Activated CD8-positive, alpha-beta memory T cell treated with anti-CD3 and anti-CD28 coated beads, Interleukin-2, amount 10 ng/mL, durations not matched to agents 7 days and 5 days (primary cell): ENCODE measurements at regions of chr14 and their contacts with region 1.

Region 1: DNA sequence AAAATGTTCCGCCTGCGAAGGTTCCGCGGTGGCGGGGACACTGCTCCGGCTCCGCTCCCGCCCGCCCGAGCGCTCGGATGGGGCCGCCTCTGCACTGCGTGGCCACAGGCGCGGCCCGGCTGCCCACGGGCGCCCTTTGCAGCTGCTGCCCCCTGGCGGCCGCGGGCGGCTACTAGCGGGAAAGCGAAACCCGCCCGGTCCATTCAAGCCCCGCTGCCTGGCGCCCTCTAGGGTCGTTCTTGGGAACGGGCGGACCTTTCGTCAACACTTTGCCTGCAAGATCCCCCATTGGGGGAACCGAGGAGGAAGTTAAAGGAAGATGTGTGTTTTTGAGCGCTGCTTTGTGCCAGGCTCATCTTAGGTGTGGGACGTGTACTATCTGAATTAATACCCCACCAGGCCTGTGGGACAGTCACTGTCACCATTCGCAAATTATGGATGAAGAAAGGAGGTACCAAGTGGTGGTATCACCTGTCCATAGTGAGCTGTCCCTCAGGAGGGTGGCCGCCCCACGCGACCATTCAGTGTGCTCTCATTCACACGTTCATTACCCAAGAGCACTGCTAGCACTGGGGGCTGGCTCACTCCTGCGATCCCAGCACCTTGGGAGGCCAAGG is 19.4 kb downstream of the GPR132 start:
- DNase-seq: peak; percentile 95
- ATAC-seq: peak; percentile 87
- H3K4me3 Mint-ChIP-seq: no peak overlapping the region
- H3K27ac Mint-ChIP-seq: peak overlapping the region; percentile 44
- H3K4me1 Mint-ChIP-seq: peaks cover 25% of the 10 kb centered on the region
- H3K27me3 Mint-ChIP-seq: peaks cover 12% of the 10 kb centered on the region

Region 2: DNA sequence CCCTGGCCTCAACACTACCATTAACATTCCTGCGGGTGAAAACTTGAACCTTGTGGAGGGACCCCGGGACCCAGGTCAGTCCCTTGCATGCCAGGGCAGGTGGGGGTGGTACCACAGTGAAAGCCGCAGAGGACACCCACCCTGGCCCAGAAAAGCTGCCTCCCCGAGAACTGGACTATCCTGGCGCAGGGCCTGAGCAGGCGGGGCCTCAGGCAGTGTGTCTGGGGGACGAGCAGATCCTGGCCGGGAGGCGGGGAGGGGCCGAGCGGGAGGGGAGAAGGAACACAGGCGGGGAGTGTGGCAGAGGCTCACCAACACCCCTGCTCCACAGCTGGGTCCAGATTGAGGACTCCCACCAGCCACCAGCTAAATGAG is 77.7 kb before region 1 on chr14:
- CTCF ChIA-PET with region 1: interaction called, 140 read pairs
- DNase-seq: no peak
- ATAC-seq: no peak
- H3K4me3 Mint-ChIP-seq: no peak overlapping the region
- H3K27ac Mint-ChIP-seq: no peak overlapping the region
- H3K4me1 Mint-ChIP-seq: peaks cover 2% of the 10 kb centered on the region
- H3K27me3 Mint-ChIP-seq: peaks cover 23% of the 10 kb centered on the region

Region 3: DNA sequence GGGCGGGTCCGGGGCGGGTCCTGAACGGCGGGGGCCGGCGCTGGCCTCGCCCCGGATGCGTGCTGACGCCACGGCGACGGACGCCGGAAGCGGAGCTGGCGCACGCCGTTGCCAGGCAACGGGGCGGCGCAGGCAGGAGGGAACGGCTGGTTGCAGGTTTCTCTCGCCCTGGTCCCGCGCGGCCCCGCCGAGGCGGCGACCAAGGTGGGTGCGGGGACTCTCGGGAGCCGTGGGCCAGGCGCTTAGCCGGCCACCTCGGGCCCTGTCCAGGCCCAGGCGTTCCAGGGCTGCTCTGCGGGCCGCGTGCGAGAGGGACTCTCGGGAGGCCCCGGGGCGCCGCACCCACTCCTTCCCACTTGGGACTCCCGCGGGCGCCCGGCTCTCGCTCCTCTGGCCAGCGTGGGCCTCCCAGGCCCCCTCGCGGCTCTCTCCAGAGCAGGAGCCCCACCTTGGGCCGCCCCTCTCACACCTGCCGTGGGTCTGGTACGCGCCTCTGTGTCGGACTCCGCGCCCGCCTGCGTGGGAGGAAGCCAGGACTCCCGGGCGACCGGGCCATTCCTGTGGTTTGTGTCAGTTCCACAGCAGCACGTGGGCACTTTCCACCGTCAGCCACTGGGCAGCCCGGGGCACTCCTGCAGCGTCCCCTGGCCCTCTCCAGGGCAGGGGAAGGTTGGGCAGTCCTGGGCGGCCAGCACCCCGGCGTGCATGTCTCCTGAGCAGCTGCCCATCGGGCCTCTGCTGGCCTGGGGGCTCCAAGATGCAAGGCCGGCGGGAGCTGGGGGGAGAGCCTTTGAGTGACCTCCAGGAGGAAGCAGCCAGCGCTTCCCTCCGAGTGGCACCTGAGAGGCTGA is 59.9 kb before region 1 on chr14 and contains the start of gene CLBA1:
- CTCF ChIA-PET with region 1: interaction called, 69 read pairs
- DNase-seq: peak; percentile 93
- ATAC-seq: peak; percentile 93
- H3K4me3 Mint-ChIP-seq: peak within 1 kb of the TSS; percentile 52
- H3K27ac Mint-ChIP-seq: peak within 1 kb of the TSS; percentile 58
- H3K4me1 Mint-ChIP-seq: peaks cover 5% of the 10 kb centered on the region
- H3K27me3 Mint-ChIP-seq: peaks cover 3% of the 10 kb centered on the region
- total RNA-seq, gene CLBA1: 0.56 to 0.67 TPM

Region 4: GRCh38 chr14:105005929-105006830 is 39.6 kb before region 1 on chr14:
- CTCF ChIA-PET with region 1: interaction called, 17 read pairs
- DNase-seq: no peak
- ATAC-seq: no peak
- H3K4me3 Mint-ChIP-seq: no peak overlapping the region
- H3K27ac Mint-ChIP-seq: no peak overlapping the region
- H3K4me1 Mint-ChIP-seq: peaks cover 1% of the 10 kb centered on the region
- H3K27me3 Mint-ChIP-seq: no peaks in the 10 kb centered on the region

Region 5: DNA sequence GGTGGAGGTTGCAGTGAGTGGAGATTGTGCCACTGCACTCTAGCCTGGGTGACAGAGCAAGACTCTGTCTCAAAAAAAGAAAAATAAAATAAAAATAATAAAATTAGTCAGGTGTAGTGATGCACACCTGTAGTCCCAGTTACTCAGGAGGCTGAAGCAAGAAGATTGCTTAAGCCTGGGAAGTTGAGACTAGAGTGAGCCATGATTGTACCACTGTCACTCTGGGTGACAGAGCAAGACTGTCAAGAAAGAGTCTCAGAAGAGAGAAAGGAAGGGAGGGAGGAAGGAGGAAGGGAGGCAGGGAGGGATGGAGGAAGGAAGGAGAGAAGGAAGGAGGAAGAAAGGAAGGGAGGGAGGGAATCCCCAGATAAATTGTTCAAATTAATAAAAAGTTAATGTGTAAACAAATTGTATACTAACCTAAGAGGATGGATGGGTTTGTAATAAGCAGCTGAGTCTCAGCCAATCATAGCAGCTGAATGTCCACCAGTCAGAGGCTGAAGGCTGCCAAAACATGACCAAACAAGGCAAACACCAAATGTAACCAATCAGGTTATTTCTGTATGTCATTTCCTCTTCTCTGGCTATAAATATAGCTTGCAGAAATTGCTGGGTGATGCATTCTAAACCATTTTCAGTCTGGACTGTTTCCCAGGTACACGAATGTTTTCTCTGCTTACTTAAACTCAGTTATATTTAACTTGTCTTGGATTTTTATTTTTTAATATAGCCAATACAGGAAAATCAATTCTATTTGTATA is 18.8 kb before region 1 on chr14:
- CTCF ChIA-PET with region 1: interaction called, 96 read pairs
- DNase-seq: no peak
- ATAC-seq: no peak
- H3K4me3 Mint-ChIP-seq: no peak overlapping the region
- H3K27ac Mint-ChIP-seq: peak overlapping the region; percentile 92
- H3K4me1 Mint-ChIP-seq: peaks cover 42% of the 10 kb centered on the region
- H3K27me3 Mint-ChIP-seq: no peaks in the 10 kb centered on the region

Region 6: DNA sequence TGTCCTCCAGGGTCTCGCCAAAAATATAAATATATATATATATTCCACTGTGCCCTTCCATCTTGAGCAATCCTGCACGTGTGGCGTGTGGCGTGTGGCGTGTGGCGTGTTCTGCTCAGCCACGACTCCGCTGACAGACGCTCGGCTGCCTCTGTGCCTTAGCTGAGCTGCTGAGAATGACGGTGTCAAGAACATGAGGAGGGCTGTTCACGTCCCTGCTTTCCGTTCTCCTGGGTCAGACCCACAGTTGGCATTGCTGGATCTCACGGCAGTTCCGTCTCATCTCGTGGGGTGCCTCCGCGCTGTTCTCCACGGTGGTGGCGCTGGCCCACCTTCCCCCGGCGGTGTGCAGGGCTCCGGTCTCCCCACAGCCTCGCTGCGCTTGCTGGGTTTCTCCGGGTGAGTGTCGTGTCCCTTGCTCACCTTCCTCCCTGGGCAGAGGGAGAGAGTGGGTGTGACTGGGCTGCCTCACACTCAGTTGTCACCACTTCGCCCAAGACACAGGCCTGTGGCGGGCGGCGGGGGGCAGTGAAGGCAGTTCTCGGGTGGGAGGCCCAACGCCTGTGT is 10.0 kb after region 1 on chr14:
- CTCF ChIA-PET with region 1: interaction called, 95 read pairs
- DNase-seq: no peak
- ATAC-seq: no peak
- H3K4me3 Mint-ChIP-seq: no peak overlapping the region
- H3K27ac Mint-ChIP-seq: no peak overlapping the region
- H3K4me1 Mint-ChIP-seq: peaks cover 33% of the 10 kb centered on the region
- H3K27me3 Mint-ChIP-seq: no peaks in the 10 kb centered on the region

Region 7: GRCh38 chr14:105086833-105087307 is 41.1 kb after region 1 on chr14:
- CTCF ChIA-PET with region 1: interaction called, 64 read pairs
- DNase-seq: peak; percentile 93
- ATAC-seq: peak; percentile 91
- H3K4me3 Mint-ChIP-seq: peak overlapping the region; percentile 68
- H3K27ac Mint-ChIP-seq: peak overlapping the region; percentile 65
- H3K4me1 Mint-ChIP-seq: peaks cover 27% of the 10 kb centered on the region
- H3K27me3 Mint-ChIP-seq: peaks cover 13% of the 10 kb centered on the region